ENCODE measurements at regions of chr2 and their contacts with region 1.

Region 1: DNA sequence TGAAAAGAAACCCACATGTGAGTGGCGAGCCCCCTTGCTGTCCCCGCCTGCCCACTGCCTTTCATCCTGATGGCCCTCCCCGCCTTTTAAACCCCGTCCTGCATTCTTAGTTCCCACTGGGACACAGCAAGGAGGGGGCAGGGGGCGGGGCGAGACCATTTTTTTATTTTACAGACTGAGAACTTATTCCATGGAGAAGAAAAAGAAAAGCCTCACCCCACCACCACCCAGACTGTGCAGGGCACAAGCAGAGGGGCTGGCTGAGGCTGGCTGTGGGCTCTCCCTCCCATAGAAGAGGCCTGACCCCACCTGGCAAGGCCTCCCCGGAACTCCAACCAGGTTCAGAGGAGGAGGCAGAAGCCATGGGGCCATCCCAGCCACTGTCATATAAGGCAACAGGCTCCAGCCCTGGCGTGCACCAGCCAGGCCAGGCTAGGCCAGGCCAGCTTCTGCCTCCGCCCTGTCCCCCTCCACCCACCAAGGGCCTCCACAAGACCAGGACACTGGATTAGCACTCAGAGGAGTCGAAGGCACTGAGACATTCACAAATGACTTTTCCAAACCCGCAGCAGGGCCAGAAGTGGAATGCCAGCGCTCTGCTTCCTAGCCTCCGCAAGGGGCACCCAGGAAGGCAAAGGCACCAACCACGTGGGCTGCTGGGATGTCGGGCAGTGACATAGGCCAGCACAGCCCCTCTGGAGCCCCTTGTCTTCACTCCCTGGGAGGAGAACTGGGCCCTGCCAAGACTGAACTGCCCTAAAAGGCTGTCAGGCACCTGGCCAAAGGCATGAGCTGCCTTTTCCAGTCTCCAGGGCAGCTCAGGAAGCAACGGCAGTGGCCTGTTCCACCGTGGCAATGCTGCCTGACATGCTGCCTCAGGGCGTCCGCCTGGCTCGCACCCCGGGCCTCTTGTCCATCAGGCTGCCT is 37.5 kb upstream of the SEMA4C start:
- DNase-seq: peak; percentile 88 to 94 (median 90)
- ATAC-seq: peak; percentile 93 to 96 (median 94)
- H3K4me3 ChIP-seq: peak overlapping the region in 10 of 12 donors; percentile 2 to 49 (median 31)
- H3K27ac ChIP-seq: peak overlapping the region; percentile 87 to 99 (median 92)
- H3K4me1 ChIP-seq: peaks cover 22 to 60% (median 44%) of the 10 kb centered on the region in 12 donors
- H3K27me3 ChIP-seq: no peaks in the 10 kb centered on the region
- CTCF ChIP-seq: peak in 2 of 12 donors; percentile 8 to 23
- POLR2A ChIP-seq: peak in 1 of 2 donors; percentile 56

Region 2: DNA sequence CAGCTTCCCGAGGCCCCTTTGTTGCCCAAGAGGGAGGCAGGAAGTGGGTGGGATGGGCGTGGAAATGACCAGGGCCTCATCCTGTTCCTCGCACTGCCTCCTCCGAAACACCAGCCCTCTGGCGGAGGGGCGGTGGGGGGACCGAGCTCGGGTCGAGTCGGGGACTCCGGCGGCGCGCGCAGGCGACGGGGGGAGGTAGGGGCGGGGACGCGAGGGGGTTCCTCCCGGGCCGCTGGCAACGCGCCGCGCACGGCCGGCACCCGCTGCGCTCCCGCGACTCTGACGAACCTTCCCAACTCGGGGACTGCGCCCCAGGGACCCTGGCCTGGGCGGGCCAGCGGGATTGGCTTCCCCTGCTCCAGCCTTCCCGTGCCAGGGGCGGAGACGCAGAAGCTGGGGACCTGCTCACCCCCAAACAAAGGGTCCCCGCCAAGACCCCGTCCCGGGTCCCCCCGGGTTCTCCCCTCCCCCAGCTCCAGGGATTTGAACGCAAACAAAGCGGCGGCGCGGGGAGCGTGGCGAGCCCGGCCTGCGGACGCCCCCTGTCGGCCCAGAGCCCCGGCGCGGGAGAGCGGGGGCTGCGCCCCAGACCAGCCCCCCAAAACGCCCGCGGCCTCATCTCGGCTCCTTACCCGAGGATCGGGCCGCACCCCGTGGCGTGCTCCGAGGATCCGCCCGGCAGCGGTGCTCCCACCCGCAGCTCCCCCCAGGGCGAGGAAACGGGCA is 38.7 kb before region 1 on chr2:
- intact Hi-C with region 1: loop called in 8 of 10 experiments (anchors 1 to 5 kb)
- DNase-seq: peak; percentile 90 to 95 (median 93)
- ATAC-seq: peak; percentile 68 to 74 (median 72)
- H3K4me3 ChIP-seq: peak overlapping the region; percentile 79 to 100 (median 98)
- H3K27ac ChIP-seq: peak overlapping the region; percentile 96 to 100 (median 98)
- H3K4me1 ChIP-seq: peaks cover 3 to 80% (median 51%) of the 10 kb centered on the region in 12 donors
- H3K27me3 ChIP-seq: peaks cover 0 to 27% (median 0%) of the 10 kb centered on the region in 9 donors
- CTCF ChIP-seq: peak; percentile 30 to 82 (median 64)
- POLR2A ChIP-seq: peak in 1 of 2 donors; percentile 40

Region 3: DNA sequence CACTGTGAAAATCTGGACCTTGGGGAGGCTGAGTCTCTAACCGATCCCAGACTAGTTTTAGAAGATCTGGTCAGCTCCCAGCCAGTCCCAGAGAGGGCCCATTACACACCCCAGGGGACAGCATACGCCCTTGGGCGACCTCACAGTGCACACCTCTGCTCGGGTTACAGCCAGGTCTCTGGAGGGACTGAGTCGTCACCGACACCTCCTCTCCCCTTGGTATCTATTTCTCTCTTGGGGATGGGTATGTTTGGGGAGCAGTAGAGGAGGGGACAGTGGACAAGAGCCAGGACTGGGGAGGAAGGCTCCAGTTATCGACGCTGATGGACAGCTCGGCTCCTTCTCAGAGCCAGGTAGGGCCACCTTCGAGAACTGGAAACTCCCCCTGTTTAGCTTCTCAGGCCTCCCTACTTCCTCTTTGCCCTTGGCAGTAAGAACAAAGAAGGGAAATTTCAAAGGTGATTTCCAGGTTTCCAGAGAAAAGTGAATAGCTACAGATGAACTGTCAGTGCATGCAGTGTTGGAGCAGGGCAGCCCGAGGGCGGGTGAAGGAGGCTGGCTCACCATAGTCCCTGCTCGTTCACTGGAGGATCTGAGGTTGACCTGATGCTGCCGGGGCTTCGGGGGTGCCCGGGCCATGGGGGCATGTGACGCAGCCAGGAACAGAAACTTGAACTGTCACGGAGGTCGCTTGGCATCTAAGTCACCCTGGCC is 33.1 kb before region 1 on chr2:
- intact Hi-C with region 1: loop called in 9 of 10 experiments (anchors 1 to 5 kb)
- DNase-seq: peak in 1 of 5 donors; percentile 47
- ATAC-seq: peak in 2 of 4 donors; percentile 6 to 10
- H3K4me3 ChIP-seq: peak overlapping the region in 1 of 12 donors; percentile 10
- H3K27ac ChIP-seq: peak overlapping the region; percentile 66 to 100 (median 81)
- H3K4me1 ChIP-seq: peaks cover 3 to 53% (median 32%) of the 10 kb centered on the region in 12 donors
- H3K27me3 ChIP-seq: peaks cover 0 to 20% (median 0%) of the 10 kb centered on the region in 9 donors
- CTCF ChIP-seq: no peak
- POLR2A ChIP-seq: no peak